ENCODE measurements at regions of chr21 and their contacts with region 1.

Region 1: GRCh38 chr21:37166733-37167132 is 93.7 kb downstream of the TTC3 start:
- DNase-seq: no peak
- H3K4me3 Mint-ChIP-seq: no peak overlapping the region
- H3K27ac Mint-ChIP-seq: peak overlapping the region; percentile 50
- H3K4me1 Mint-ChIP-seq: peaks cover 10% of the 10 kb centered on the region
- H3K27me3 Mint-ChIP-seq: no peaks in the 10 kb centered on the region

Region 2: DNA sequence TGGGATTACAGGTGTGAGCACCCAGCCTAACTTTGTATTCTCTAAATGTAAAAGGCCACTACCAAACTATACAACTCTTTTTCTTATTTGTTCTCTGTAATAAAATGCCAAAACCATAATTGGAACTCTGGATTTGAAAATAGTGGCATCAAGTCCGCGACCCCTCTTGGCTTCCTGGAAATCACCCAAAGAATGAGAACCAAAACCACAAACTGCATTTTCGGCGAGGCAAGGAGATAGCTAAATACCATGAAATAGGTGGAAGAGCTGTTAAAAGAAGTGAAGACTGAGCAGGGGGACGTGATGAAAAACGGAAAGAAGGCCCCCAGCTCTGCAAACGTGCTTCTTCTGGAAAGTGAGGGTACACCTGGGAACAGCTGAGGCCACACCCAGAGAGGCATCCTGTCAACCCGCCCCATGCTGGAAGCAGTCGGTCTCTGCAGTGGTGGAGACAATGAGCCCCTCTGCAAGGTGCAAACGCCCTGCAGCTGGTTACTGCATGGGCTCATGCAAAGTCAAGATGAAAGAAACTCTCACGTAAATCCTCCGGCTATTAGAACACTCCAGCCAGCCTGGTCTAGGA is 77.9 kb after region 1 on chr21:
- intact Hi-C with region 1: no loop called
- DNase-seq: no peak
- H3K4me3 Mint-ChIP-seq: peak overlapping the region; percentile 67
- H3K27ac Mint-ChIP-seq: peak overlapping the region; percentile 73
- H3K4me1 Mint-ChIP-seq: peaks cover 84% of the 10 kb centered on the region
- H3K27me3 Mint-ChIP-seq: no peaks in the 10 kb centered on the region

Region 3: GRCh38 chr21:37496972-37497371 is 330.2 kb after region 1 on chr21:
- intact Hi-C with region 1: loop called (anchors 10 kb)
- DNase-seq: no peak
- H3K4me3 Mint-ChIP-seq: no peak overlapping the region
- H3K27ac Mint-ChIP-seq: no peak overlapping the region
- H3K4me1 Mint-ChIP-seq: peaks cover 11% of the 10 kb centered on the region
- H3K27me3 Mint-ChIP-seq: no peaks in the 10 kb centered on the region

Region 4: GRCh38 chr21:37642493-37642892 is 475.8 kb after region 1 on chr21:
- intact Hi-C with region 1: loop called (anchors 5 kb)
- DNase-seq: peak; percentile 8
- H3K4me3 Mint-ChIP-seq: no peak overlapping the region
- H3K27ac Mint-ChIP-seq: no peak overlapping the region
- H3K4me1 Mint-ChIP-seq: peaks cover 5% of the 10 kb centered on the region
- H3K27me3 Mint-ChIP-seq: peaks cover 18% of the 10 kb centered on the region